Heart right ventricle (tissue), 16 donors: ENCODE measurements at regions of chr5 and their contacts with region 1.

Region 1: DNA sequence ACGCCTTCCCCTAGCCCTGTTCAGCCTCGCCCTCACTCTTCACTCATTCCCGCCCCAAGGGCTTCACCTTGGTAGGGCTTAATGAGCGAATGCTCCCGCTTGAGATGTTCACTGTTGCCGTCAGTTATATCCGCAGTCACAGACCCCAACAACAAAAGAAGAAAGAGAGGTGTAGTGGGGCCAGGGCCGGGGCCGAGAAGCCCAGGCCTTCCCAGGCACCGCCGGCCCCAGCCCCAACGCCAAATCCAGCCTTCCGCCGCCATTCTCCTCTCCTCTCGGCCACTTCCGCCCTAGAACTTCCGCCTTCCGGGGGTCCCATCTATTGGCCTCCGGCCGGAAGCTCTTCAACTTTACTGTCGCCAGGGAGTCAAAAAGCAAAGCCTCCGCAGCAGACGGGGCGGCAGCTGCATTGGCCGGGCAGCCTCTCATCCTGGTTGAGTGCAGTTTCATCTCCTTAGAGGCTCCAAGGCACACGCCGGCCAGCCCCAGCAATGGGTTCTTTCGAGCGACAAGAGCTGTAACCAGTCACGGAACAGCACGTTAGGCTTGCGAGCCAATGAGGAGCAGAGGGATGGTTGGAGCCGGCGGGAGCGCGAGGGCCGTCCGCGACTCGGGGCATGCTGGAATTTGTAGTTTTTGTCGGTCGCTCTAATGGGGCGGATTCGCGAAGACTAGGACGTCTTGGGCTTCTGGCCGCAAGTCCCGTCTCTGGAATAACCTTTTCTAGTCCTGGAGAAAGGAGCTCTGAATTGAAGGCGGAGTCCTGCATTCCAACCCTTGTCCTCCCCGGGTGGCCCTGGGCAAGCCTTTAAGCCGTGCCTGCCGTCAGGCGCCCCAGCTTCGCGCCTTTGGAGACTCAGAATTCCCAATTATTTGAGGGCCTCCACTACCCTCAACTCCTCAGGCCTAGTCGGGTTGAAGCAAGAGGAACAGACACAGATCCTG is at the start of gene LMAN2:
- DNase-seq: peak; percentile 89 to 97
- ATAC-seq: peak; percentile 96 to 99 (median 99)
- H3K4me3 ChIP-seq: peak within 1 kb of the TSS; percentile 53 to 100 (median 85)
- H3K27ac ChIP-seq: peak within 1 kb of the TSS; percentile 74 to 98 (median 92)
- H3K4me1 ChIP-seq: peaks cover 7 to 76% (median 32%) of the 10 kb centered on the region in 9 donors
- H3K27me3 ChIP-seq: no peaks in the 10 kb centered on the region
- CTCF ChIP-seq: no peak
- total RNA-seq, gene LMAN2: 46.3 to 111 (median 56.3) TPM

Region 2: DNA sequence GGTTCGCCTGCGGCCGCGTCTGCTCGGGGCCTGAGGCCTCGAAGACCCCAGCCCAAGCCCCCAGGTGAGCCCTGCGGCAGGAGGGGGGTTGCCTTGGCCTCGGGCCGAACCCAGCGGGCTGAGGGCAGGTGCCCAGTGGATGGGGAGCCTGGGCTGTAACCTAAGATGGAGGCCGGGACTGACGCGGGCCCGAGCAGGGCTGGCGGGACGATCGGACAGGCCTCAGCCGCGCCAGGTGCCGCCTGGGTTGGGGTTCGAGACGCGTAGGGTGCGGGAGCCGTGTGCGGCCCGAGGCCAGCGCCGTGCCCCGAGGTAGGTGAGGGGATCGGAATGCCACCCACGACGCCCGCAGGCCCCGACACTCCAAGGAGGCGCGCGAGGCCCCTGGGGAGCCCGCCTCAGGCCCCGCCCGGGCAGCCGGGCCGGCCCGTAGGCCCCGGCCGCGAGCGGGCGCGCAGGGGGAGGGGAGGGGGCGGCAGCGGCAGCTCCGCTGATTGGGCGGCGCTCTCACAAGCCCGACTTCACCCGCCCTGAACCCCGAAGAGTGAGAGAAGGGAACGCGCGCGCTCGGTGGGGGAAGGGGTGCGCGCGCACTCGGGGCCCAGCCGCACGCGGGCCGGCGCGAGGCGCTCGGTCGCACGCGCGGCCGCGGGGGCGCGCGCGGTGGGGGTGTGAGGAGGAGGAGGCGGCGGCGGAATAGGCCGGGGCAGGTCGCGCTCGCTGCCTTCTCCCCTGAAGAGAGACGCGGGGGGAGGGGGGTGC is 218.4 kb before region 1 on chr5 and contains the start of gene NSD1:
- intact Hi-C with region 1: loop called in 1 of 10 experiments (anchors 5 kb)
- DNase-seq: peak; percentile 87 to 90
- ATAC-seq: peak; percentile 78 to 85 (median 84)
- H3K4me3 ChIP-seq: peak within 1 kb of the TSS; percentile 65 to 90 (median 74)
- H3K27ac ChIP-seq: peak within 1 kb of the TSS; percentile 85 to 98 (median 94)
- H3K4me1 ChIP-seq: peaks cover 20 to 67% (median 46%) of the 10 kb centered on the region in 9 donors
- H3K27me3 ChIP-seq: no peaks in the 10 kb centered on the region
- CTCF ChIP-seq: no peak
- total RNA-seq, gene NSD1: 34.4 to 62.9 (median 47.2) TPM

Region 3: GRCh38 chr5:177317959-177318377 is 33.7 kb before region 1 on chr5:
- intact Hi-C with region 1: loop called in 1 of 10 experiments (anchors 5 kb)
- DNase-seq: peak in 1 of 2 donors; percentile 70
- ATAC-seq: peak in 7 of 8 donors; percentile 45 to 67 (median 57)
- H3K4me3 ChIP-seq: no peak overlapping the region
- H3K27ac ChIP-seq: no peak overlapping the region
- H3K4me1 ChIP-seq: peaks cover 0 to 14% (median under 1%) of the 10 kb centered on the region in 9 donors
- H3K27me3 ChIP-seq: no peaks in the 10 kb centered on the region
- CTCF ChIP-seq: peak; percentile 72 to 91 (median 85)

Region 4: GRCh38 chr5:177456976-177457854 is 105.6 kb after region 1 on chr5:
- intact Hi-C with region 1: no loop called
- DNase-seq: peak; percentile 64 to 82
- ATAC-seq: peak; percentile 22 to 52 (median 43)
- H3K4me3 ChIP-seq: no peak overlapping the region
- H3K27ac ChIP-seq: peak overlapping the region in 7 of 10 donors; percentile 39 to 80 (median 75)
- H3K4me1 ChIP-seq: peaks cover 10 to 62% (median 46%) of the 10 kb centered on the region in 9 donors
- H3K27me3 ChIP-seq: peaks cover 0 to 21% (median 0%) of the 10 kb centered on the region in 7 donors
- CTCF ChIP-seq: peak; percentile 28 to 61 (median 53)

Region 5: GRCh38 chr5:177473461-177474001 is 121.9 kb after region 1 on chr5 and contains the start of gene DBN1:
- intact Hi-C with region 1: no loop called
- DNase-seq: peak in 1 of 2 donors; percentile 64
- ATAC-seq: peak; percentile 21 to 65 (median 30)
- H3K4me3 ChIP-seq: peak within 1 kb of the TSS; percentile 54 to 85 (median 70)
- H3K27ac ChIP-seq: peak within 1 kb of the TSS; percentile 78 to 93 (median 86)
- H3K4me1 ChIP-seq: peaks cover 24 to 72% (median 51%) of the 10 kb centered on the region in 9 donors
- H3K27me3 ChIP-seq: peaks cover 0 to 47% (median 14%) of the 10 kb centered on the region in 7 donors
- CTCF ChIP-seq: no peak
- total RNA-seq, gene DBN1: 13.1 to 52.9 (median 19.1) TPM

Region 6: DNA sequence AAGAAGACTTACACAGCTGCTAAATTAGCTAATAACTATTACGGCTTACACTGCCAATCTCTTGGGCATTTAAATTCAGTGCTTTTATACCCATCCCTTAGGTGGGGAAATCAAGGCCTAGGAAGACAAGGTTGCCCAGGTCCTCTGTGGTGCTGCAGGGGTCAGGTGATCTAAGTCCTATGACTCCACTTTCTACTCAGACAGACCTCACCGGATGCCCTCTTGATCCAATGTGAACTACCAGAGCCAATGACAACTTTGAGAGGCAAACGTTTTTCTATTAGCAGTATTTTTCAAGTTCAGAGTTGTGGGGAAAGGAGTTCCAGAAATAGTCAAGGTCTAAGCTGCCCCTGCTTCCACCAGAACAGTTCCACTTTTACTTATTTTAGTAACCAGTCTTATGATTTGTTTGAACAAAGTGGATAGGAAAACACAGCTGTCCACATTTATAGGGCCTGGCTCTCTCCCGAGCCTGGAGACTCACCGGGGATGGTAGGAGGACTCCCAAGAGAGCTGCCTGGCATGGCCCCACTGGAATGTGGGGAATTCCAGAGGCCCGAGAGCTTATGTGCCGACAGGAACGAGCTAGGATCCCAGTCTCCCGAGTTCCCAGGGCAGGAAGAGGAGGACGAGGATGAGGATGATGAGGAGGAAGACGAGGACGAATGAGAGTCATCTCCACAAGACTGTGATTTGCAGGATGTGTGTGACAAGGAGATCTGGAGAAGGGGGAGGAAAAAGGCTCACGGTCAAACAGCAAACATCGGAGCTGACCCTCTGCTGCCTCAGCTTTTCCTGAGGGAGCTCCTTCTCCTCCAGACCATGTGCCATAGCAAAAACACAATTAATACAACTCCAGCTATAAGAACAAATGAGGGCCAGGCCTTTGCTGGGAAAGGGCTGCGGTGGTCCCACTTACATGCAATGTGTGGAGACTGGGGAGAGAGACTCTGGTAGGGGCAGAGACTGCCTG is 186.0 kb after region 1 on chr5:
- intact Hi-C with region 1: no loop called
- DNase-seq: peak; percentile 43 to 48
- ATAC-seq: peak; percentile 41 to 82 (median 72)
- H3K4me3 ChIP-seq: no peak overlapping the region
- H3K27ac ChIP-seq: peak overlapping the region; percentile 2 to 86 (median 67)
- H3K4me1 ChIP-seq: peaks cover 20 to 59% (median 52%) of the 10 kb centered on the region in 9 donors
- H3K27me3 ChIP-seq: no peaks in the 10 kb centered on the region
- CTCF ChIP-seq: no peak